Heart left ventricle (tissue), 16 donors: ENCODE measurements at regions of chr1 and their contacts with region 1.

Region 1: DNA sequence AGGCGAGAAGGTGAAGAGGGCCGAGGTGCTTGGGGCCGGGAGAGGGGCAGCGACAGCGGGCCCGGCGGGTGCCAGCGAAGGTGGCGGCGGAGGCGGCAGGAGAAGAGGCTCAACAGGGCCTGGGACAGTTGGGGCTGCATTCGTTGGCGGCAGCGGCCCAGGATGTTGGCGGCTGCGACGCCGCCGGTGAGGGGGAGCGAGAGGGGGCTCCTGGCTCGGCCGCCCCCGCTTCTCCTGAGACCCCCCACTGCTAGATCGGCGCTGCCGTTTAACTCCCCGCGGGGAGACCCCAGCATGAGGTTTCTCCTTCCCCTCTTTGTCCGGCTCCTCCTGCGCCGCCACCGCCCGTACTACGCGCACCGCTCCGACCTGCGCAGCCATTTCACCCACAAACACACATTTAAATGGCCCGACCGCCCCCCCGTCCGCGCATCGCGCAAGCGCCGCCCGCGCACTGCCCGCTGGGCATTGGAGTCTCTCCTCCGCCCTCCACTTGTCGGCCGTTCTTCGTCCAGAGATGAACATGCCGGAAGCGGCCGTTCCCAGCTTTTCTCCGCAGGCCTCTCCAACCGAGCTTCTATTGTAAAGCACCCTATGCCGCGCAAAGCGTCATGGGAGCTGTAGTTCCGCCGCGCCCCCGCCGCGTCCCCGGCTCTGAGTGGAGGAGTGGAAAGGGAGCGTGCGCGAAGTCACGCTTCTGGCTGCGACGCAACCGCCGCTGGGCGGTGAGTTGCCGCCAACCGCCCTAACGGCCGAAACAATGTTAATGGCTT is at the start of gene RSBN1:
- DNase-seq: peak; percentile 99
- ATAC-seq: peak; percentile 97 to 99 (median 98)
- H3K4me3 ChIP-seq: peak within 1 kb of the TSS; percentile 73 to 99 (median 88)
- H3K27ac ChIP-seq: peak within 1 kb of the TSS; percentile 81 to 98 (median 93)
- H3K4me1 ChIP-seq: peaks cover 3 to 37% (median 24%) of the 10 kb centered on the region in 12 donors
- H3K27me3 ChIP-seq: no peaks in the 10 kb centered on the region
- CTCF ChIP-seq: peak in 4 of 12 donors; percentile 7 to 29 (median 26)
- POLR2A ChIP-seq: peak; percentile 91 to 95
- total RNA-seq, gene RSBN1: 7.8 to 17.8 (median 10.6) TPM

Region 2: GRCh38 chr1:113742515-113742914 is 69.6 kb before region 1 on chr1:
- intact Hi-C with region 1: no loop called
- DNase-seq: no peak
- ATAC-seq: no peak
- H3K4me3 ChIP-seq: no peak overlapping the region
- H3K27ac ChIP-seq: no peak overlapping the region
- H3K4me1 ChIP-seq: peaks cover 0 to 5% (median 0%) of the 10 kb centered on the region in 12 donors
- H3K27me3 ChIP-seq: no peaks in the 10 kb centered on the region
- CTCF ChIP-seq: no peak
- POLR2A ChIP-seq: no peak

Region 3: GRCh38 chr1:113759333-113760101 is 52.6 kb before region 1 on chr1 and contains the start of gene PHTF1:
- intact Hi-C with region 1: loop called (anchors 2 to 5 kb)
- DNase-seq: peak; percentile 70 to 91 (median 84)
- ATAC-seq: peak; percentile 87 to 94 (median 94)
- H3K4me3 ChIP-seq: peak within 1 kb of the TSS; percentile 50 to 94 (median 86)
- H3K27ac ChIP-seq: peak within 1 kb of the TSS; percentile 86 to 97 (median 95)
- H3K4me1 ChIP-seq: peaks cover 0 to 27% (median 10%) of the 10 kb centered on the region in 12 donors
- H3K27me3 ChIP-seq: no peaks in the 10 kb centered on the region
- CTCF ChIP-seq: no peak
- POLR2A ChIP-seq: peak in 1 of 2 donors; percentile 60
- total RNA-seq, gene PHTF1: 5.5 to 19.7 (median 11.9) TPM

Region 4: GRCh38 chr1:113855630-113856400 is 43.7 kb after region 1 on chr1:
- intact Hi-C with region 1: no loop called
- DNase-seq: no peak
- ATAC-seq: no peak
- H3K4me3 ChIP-seq: no peak overlapping the region
- H3K27ac ChIP-seq: no peak overlapping the region
- H3K4me1 ChIP-seq: peaks cover 0 to 35% (median 0%) of the 10 kb centered on the region in 12 donors
- H3K27me3 ChIP-seq: no peaks in the 10 kb centered on the region
- CTCF ChIP-seq: no peak
- POLR2A ChIP-seq: no peak

Region 5: GRCh38 chr1:113928941-113929749 is 117.1 kb after region 1 on chr1 and contains the start of gene HIPK1:
- intact Hi-C with region 1: loop called in 1 of 10 experiments (anchors 1 kb)
- DNase-seq: peak; percentile 94 to 96 (median 96)
- ATAC-seq: peak; percentile 95 to 96 (median 96)
- H3K4me3 ChIP-seq: peak within 1 kb of the TSS; percentile 73 to 99 (median 94)
- H3K27ac ChIP-seq: peak within 1 kb of the TSS; percentile 62 to 98 (median 95)
- H3K4me1 ChIP-seq: peaks cover 6 to 52% (median 37%) of the 10 kb centered on the region in 12 donors
- H3K27me3 ChIP-seq: no peaks in the 10 kb centered on the region
- CTCF ChIP-seq: no peak
- POLR2A ChIP-seq: peak in 1 of 2 donors; percentile 68
- total RNA-seq, gene HIPK1: 41.8 to 102 (median 62.7) TPM